RWPE1 (cell line): ENCODE measurements at regions of chr10 and their contacts with region 1.

Region 1: DNA sequence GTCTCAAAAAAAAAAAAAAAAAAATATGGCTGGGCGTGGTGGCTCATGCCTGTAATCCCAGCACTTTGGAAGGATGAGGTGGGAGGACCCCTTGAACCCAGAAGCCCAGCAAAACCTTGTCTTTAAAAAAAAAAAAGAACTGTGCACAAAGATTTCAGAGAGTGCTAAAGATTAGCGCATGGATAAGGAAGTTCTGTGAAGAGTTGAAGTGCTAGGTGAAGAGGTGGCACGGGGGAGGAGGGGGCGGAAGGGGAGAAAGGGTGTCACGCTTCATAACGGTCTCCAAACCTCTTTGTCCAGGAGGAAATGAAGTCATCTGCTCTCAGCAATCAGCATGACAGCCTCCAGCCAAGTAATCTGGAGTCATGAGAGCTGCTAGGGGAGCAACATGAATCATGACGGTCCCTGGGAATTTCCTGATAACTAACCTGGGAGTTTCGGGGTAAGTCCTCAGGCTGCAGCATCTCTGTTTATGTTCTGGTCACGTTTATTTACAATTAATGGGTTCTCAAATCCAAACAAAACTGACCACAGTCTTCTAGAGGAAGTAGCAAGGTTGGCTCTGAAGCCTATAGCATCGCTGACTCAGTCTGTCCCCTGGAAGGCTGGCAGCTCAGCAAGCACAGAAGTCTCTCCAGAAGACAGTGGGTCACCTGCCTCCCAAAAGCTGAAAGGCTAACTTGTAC is 1.9 kb upstream of the PLAU start:
- DNase-seq: peak; percentile 85
- H3K27ac ChIP-seq: peak overlapping the region; percentile 97
- CTCF ChIP-seq: no peak

Region 2: DNA sequence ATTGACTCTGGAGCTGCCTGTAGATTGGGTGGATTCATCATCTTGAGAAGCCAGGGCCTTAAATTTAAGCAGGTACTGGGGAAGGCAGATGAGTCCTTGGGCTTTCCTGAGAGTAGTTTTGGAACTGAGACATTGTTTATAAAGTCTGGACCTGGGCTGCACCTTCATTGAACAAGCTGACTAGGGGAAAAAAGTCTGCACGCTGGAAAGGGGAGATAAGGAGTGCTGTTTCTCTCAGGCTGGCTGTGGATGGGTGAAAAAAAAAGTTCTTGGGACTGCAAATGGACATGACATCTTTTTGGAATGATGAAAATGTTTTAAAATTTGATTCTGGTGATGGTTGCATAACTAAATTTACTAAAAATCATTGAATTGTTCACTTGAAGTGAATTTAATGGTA is 152.8 kb before region 1 on chr10:
- CTCF ChIA-PET with region 1: interaction called, 10 read pairs
- POLR2A ChIA-PET with region 1: no interaction called
- DNase-seq: no peak
- H3K27ac ChIP-seq: no peak overlapping the region
- CTCF ChIP-seq: no peak

Region 3: GRCh38 chr10:73998929-73999691 is 90.1 kb after region 1 on chr10:
- CTCF ChIA-PET with region 1: no interaction called
- POLR2A ChIA-PET with region 1: no interaction called
- DNase-seq: peak; percentile 79
- H3K27ac ChIP-seq: peak overlapping the region; percentile 97
- CTCF ChIP-seq: peak; percentile 55